PC-3 (cell line): ENCODE measurements at regions of chr14 and their contacts with region 1.

Region 1: GRCh38 chr14:102139248-102140026 is at the start of gene WDR20:
- DNase-seq: peak; percentile 99
- ATAC-seq: peak; percentile 85
- H3K4me3 ChIP-seq: peak within 1 kb of the TSS; percentile 75
- H3K27ac ChIP-seq: peak within 1 kb of the TSS; percentile 66
- H3K4me1 ChIP-seq: peaks cover 10% of the 10 kb centered on the region
- H3K27me3 ChIP-seq: no peaks in the 10 kb centered on the region
- CTCF ChIP-seq: peak; percentile 34; the same call in 1 of the 2 replicates
- total RNA-seq, gene WDR20: 23.7 and 24.2 TPM in 2 replicates

Region 2: GRCh38 chr14:101953151-101953550 is 186.3 kb before region 1 on chr14:
- CTCF ChIA-PET with region 1: interaction called, 13 read pairs
- POLR2A ChIA-PET with region 1: no interaction called
- intact Hi-C with region 1: no loop called
- DNase-seq: no peak
- ATAC-seq: no peak
- H3K4me3 ChIP-seq: no peak overlapping the region
- H3K27ac ChIP-seq: no peak overlapping the region
- H3K4me1 ChIP-seq: peaks cover 9% of the 10 kb centered on the region
- H3K27me3 ChIP-seq: no peaks in the 10 kb centered on the region
- CTCF ChIP-seq: no peak

Region 3: DNA sequence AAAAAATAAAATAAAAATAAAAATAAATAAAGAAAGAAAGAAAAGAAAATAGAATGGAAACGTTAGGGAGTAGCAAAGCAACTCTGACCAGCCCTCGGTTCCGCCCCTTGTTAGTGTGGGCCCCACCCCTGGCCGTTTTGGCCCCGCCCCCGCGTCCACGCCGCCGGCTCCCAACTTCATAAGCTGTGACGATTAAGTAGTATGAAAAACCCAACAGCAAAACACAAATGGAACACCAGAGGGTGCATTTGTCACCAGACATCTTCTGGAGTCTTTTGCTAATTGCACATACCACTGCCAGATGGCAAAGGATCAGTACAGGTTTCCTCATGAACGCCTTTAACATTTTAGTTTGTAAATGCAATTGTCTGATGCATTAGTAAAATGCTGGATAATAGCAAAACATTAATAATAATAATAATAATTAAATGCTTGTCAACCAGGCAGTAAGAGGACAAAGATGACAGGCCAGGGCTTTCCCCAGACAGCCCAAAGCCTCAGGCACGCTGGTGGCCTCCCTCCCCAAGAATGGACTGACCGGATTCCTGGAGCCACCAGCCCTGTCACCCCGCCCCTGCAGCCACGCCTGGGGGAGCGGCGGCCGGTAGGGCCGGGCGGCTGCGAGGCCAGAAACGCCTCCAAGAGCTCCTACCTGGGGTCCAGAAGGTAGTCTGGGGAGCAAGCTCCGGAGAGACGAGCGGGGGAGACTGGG is 76.2 kb before region 1 on chr14:
- CTCF ChIA-PET with region 1: no interaction called
- POLR2A ChIA-PET with region 1: interaction called, 18 read pairs
- intact Hi-C with region 1: no loop called
- DNase-seq: peak; percentile 96
- ATAC-seq: peak; percentile 94
- H3K4me3 ChIP-seq: peak overlapping the region; percentile 43
- H3K27ac ChIP-seq: peak overlapping the region; percentile 31
- H3K4me1 ChIP-seq: peaks cover 8% of the 10 kb centered on the region
- H3K27me3 ChIP-seq: no peaks in the 10 kb centered on the region
- CTCF ChIP-seq: peak; percentile 69

Region 4: GRCh38 chr14:102555264-102555831 is 415.9 kb after region 1 on chr14:
- CTCF ChIA-PET with region 1: no interaction called
- POLR2A ChIA-PET with region 1: no interaction called
- intact Hi-C with region 1: no loop called
- DNase-seq: no peak
- ATAC-seq: no peak
- H3K4me3 ChIP-seq: peak overlapping the region; percentile 27; the same call in 1 of the 2 replicates
- H3K27ac ChIP-seq: no peak overlapping the region
- H3K4me1 ChIP-seq: peaks cover 12% of the 10 kb centered on the region
- H3K27me3 ChIP-seq: no peaks in the 10 kb centered on the region
- CTCF ChIP-seq: no peak